Mammary epithelial cell (primary cell): ENCODE measurements at regions of chr13 and their contacts with region 1.

Region 1: DNA sequence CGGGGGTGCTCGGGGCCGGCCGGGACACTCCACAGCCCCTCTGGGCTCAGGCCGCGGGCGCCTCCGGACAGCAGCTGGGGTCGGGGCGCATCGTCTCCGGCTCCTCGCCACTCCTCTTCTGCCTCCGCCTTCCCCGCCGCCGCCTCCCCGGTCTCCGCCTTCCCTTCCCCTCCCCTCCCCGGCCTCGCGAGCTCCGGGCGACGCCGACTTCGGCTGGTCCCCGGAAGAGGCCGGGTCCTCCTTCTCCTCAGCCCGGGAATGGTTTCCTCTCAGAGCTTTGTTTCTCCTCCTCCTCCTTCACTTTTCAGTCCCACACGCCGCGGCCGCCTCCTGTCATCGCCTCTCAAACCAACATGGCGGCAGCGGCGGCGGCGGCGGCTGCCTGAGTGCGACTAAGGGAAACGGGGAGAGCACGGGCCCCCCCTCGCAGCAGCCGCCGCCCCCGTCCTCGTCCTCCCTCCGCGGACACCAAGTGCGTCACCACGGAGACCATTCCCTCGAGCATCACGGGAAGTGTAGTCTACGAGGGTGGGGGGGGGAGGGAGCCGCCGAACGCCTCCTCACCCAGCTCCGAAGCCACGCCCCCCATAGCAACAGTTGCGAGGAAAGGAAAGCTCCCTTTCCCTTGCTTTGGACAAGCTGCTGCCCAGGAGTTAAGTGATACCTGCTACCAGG is at the start of gene UBL3:
- DNase-seq: peak; percentile 95
- H3K4me3 ChIP-seq: peak within 1 kb of the TSS; percentile 83 to 93 (median 87)
- H3K27ac ChIP-seq: peak within 1 kb of the TSS; percentile 92
- H3K4me1 ChIP-seq: peaks cover 10% of the 10 kb centered on the region
- H3K27me3 ChIP-seq: no peaks in the 10 kb centered on the region
- CTCF ChIP-seq: no peak
- total RNA-seq, gene UBL3: 11.4 to 19.0 TPM

Region 2: GRCh38 chr13:29771247-29771646 is 79.1 kb before region 1 on chr13:
- CTCF ChIA-PET with region 1: no interaction called
- dilution Hi-C with region 1: no loop called
- in situ Hi-C with region 1: no loop called
- intact Hi-C with region 1: loop called (anchors 5 kb)
- DNase-seq: peak; percentile 10
- H3K4me3 ChIP-seq: no peak overlapping the region
- H3K27ac ChIP-seq: no peak overlapping the region
- H3K4me1 ChIP-seq: no peaks in the 10 kb centered on the region
- H3K27me3 ChIP-seq: no peaks in the 10 kb centered on the region
- CTCF ChIP-seq: peak; percentile 26 to 41

Region 3: DNA sequence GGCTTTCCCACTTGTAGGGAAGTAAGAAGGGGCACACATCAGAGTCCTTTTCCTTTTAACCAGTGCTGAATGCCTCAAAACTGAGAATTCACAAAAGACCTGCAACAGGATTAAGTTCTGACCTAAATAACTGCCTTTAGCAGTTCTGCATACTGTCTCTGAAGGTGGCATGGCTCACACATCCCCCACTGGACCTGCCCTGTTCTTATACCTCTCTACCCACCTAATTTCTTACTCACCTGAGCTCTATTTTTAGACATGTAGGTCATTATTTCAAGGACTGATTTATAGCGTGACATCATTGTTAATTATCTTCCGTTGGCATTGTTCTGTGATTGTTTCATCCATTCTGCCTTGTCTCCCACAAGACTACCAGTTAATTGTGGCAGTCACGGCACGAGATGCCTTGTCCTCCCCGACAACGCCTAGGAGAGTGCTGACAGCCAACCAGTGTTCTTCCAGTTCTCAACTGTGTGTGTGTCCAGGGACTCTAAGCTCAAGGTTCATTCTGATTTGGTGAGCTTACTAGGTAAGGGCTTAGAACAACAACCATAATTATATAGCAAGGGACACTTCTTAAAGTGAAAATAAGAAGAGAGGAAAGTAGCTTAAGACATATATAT is 27.2 kb after region 1 on chr13:
- CTCF ChIA-PET with region 1: interaction called, 13 read pairs
- dilution Hi-C with region 1: no loop called
- in situ Hi-C with region 1: no loop called
- intact Hi-C with region 1: no loop called
- DNase-seq: no peak
- H3K4me3 ChIP-seq: no peak overlapping the region
- H3K27ac ChIP-seq: no peak overlapping the region
- H3K4me1 ChIP-seq: peaks cover 8% of the 10 kb centered on the region
- H3K27me3 ChIP-seq: no peaks in the 10 kb centered on the region
- CTCF ChIP-seq: no peak

Region 4: DNA sequence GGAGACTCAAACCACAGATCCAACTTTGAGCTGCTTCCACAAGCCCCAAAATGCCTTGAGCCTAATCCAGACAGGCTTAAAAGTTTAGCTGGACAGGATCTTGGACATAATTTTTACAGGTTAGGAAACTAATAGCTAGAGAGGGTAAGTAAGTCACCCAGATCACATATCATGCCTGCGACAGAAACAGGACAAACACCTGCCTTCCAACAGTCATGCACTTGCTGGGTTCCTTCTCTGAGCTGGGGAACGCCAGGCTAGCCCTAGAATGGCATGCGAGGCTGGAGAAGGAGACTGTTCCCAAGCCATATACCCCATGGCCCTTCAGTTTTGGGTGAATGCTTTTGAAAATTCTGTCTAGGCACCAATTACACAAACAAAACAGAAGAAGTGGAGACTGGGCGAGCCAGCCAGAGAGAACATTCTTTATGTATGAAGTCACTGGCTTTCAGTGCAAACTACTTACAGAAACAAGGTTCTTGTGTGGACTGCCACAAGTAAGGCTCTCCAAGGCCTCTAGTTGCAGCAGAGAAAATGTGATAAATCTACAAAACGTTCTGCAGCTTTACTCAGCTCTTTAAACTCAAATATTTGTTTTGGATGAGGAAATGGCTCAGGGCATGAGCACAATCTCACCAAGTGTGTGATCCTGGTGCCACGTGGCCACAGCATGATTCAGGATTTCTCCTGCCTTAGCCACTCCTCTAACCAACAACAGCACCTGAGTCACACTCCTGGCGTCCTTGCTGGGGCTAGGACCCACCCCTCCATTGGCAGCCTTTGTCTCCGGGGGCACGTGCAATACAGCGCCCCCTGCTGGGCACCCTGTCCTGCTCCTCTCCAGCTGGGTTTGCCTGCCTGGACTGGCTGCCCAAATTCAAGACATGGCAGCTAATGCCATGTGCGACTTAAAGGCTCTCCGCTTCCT is 73.5 kb after region 1 on chr13:
- CTCF ChIA-PET with region 1: interaction called, 15 read pairs
- dilution Hi-C with region 1: loop called (anchors 5 kb)
- in situ Hi-C with region 1: loop called in 1 of 2 experiments (anchors 5 kb)
- intact Hi-C with region 1: loop called (anchors 1 kb)
- DNase-seq: peak; percentile 97
- H3K4me3 ChIP-seq: no peak overlapping the region
- H3K27ac ChIP-seq: peak overlapping the region; percentile 95
- H3K4me1 ChIP-seq: peaks cover 50% of the 10 kb centered on the region
- H3K27me3 ChIP-seq: no peaks in the 10 kb centered on the region
- CTCF ChIP-seq: peak; percentile 89 to 97

Region 5: DNA sequence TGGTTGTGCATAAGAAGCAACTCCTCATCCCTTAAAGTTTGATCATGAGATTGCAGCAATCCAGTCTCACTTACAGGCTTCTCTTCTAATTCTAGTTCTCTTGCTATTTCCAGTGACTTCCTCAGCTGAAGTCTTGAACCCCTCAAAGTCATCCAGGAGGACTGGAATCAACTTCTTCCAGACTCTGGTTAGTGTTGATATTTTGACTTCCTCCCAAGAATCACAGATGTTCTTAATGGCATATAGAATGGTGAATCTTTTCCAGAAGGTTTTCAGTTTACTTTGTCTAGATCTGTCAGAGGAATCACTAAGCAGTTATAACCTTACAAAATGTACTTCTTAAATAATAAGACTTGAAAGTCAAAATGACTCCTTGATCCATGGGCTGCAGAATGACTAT is 81.3 kb after region 1 on chr13:
- CTCF ChIA-PET with region 1: interaction called, 17 read pairs
- dilution Hi-C with region 1: no loop called
- in situ Hi-C with region 1: no loop called
- intact Hi-C with region 1: no loop called
- DNase-seq: no peak
- H3K4me3 ChIP-seq: no peak overlapping the region
- H3K27ac ChIP-seq: no peak overlapping the region
- H3K4me1 ChIP-seq: no peaks in the 10 kb centered on the region
- H3K27me3 ChIP-seq: no peaks in the 10 kb centered on the region
- CTCF ChIP-seq: no peak

Region 6: DNA sequence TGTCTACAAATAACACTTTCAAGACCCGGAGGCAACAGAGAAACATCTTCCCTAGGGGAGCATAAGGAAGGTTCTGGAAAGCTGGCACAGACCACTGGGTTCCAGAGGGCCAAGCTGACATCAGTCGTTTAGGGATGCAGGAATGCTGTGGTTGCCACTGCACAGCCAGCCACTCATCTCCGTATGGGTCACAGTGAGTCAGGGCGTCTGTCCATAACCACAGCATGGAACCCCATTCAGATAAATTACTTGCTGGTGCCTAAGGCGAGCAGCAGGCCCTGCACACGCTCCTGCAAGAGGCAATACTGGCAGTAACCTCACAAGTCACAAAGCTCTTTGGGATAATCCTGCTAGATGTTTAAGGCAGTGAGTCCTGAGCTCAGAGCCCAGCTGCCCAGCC is 141.0 kb after region 1 on chr13:
- CTCF ChIA-PET with region 1: no interaction called
- dilution Hi-C with region 1: no loop called
- in situ Hi-C with region 1: no loop called
- intact Hi-C with region 1: loop called (anchors 5 kb)
- DNase-seq: peak; percentile 90
- H3K4me3 ChIP-seq: no peak overlapping the region
- H3K27ac ChIP-seq: no peak overlapping the region
- H3K4me1 ChIP-seq: no peaks in the 10 kb centered on the region
- H3K27me3 ChIP-seq: no peaks in the 10 kb centered on the region
- CTCF ChIP-seq: no peak

Region 7: GRCh38 chr13:30114571-30115256 is 264.4 kb after region 1 on chr13:
- CTCF ChIA-PET with region 1: interaction called, 6 read pairs
- dilution Hi-C with region 1: no loop called
- in situ Hi-C with region 1: loop called (anchors 5 to 10 kb)
- intact Hi-C with region 1: loop called (anchors 1 kb)
- DNase-seq: peak; percentile 82
- H3K4me3 ChIP-seq: peak overlapping the region; percentile 23 to 66 (median 49)
- H3K27ac ChIP-seq: peak overlapping the region; percentile 49
- H3K4me1 ChIP-seq: peaks cover 19% of the 10 kb centered on the region
- H3K27me3 ChIP-seq: no peaks in the 10 kb centered on the region
- CTCF ChIP-seq: peak; percentile 79 to 93

Region 8: DNA sequence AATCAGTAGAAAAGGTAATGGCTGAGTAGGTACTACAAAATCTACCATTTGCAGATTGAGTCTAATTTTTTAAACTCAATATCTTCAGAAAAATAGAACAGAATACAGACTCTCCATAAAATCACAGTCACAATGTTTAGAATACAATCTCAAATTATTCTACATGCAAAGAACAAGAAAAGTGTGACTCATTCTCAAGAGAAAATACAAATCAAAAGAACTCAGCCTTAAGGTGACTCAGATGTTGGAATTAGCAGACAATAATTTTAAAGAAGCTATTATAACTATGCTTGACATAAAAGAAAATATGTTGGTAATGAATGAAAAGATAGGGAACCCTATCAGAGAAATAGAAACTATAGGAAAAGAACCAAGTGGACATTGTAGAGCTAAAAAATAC is 1967.9 kb after region 1 on chr13:
- CTCF ChIA-PET with region 1: no interaction called
- dilution Hi-C with region 1: no loop called
- in situ Hi-C with region 1: no loop called
- intact Hi-C with region 1: no loop called
- DNase-seq: peak; percentile 18
- H3K4me3 ChIP-seq: no peak overlapping the region
- H3K27ac ChIP-seq: no peak overlapping the region
- H3K4me1 ChIP-seq: no peaks in the 10 kb centered on the region
- H3K27me3 ChIP-seq: no peaks in the 10 kb centered on the region
- CTCF ChIP-seq: no peak